CD14-positive monocyte (primary cell): ENCODE measurements at regions of chr1 and their contacts with region 1.

Region 1: DNA sequence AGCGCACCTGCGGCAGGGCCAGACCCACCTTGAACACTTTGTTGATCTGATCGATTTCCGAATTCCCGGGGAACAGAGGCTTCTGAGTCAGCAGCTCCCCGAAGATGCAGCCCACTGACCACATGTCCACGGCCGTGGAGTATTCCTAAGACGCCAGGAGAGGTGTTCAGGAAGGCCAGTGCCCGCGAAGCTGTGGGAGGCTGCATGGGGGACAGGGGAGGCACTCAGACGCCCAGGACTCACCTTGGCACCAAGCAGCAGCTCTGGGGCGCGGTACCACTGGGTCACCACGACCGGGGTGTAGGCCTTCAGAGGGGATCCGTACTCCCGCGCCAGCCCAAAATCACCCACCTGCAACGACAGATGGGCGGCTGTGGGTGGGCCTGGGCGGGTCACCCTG is 11.2 kb upstream of the SLC35E2B start:
- DNase-seq: no peak
- H3K4me3 ChIP-seq: no peak overlapping the region
- H3K4me3 Mint-ChIP-seq: no peak overlapping the region
- H3K27ac ChIP-seq: no peak overlapping the region
- H3K27ac Mint-ChIP-seq: peak overlapping the region in 1 of 7 donors; percentile 43
- H3K4me1 ChIP-seq: no peaks in the 10 kb centered on the region
- H3K4me1 Mint-ChIP-seq: no peaks in the 10 kb centered on the region
- H3K27me3 ChIP-seq: peaks cover 0 to 3% of the 10 kb centered on the region in 2 donors
- H3K27me3 Mint-ChIP-seq: peaks cover 3% of the 10 kb centered on the region in 3 donors
- CTCF ChIP-seq: no peak

Region 2: DNA sequence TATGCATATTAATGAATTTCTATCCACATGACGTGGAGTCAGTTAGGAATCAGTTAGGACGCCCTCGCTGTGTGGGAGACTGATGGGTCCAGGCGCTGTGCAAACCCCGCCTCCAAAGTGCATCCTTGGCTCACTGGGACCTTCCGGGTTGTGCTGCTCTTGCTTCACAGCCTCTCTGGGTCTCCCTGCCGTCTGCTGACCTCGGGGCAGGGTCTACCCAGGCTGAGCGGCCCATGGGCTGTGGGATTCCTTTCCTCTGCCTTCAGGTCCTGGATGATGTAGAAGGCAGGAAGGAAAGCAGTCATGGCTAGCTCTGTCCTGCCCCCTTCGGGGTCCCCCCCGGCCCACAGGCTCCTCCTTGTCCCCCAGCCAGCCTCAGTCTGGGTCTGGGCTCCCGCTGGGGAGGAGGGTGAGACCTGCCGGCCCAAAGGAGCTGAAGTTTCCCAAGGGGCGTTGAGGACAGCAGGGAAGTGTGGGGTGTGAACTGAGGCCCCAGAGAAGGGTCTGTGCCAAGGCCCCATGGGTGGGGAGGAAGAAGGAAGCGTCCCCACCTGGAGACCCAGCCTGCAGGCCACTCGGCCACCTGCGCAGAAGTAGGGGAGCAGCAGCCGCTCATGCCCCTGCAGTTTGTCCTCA is 45.0 kb after region 1 on chr1:
- intact Hi-C with region 1: loop called (anchors 10 kb)
- DNase-seq: no peak
- H3K4me3 ChIP-seq: no peak overlapping the region
- H3K4me3 Mint-ChIP-seq: no peak overlapping the region
- H3K27ac ChIP-seq: no peak overlapping the region
- H3K27ac Mint-ChIP-seq: peak overlapping the region in 1 of 7 donors; percentile 74
- H3K4me1 ChIP-seq: no peaks in the 10 kb centered on the region
- H3K4me1 Mint-ChIP-seq: peaks cover 7% of the 10 kb centered on the region
- H3K27me3 ChIP-seq: no peaks in the 10 kb centered on the region
- H3K27me3 Mint-ChIP-seq: no peaks in the 10 kb centered on the region
- CTCF ChIP-seq: no peak

Region 3: DNA sequence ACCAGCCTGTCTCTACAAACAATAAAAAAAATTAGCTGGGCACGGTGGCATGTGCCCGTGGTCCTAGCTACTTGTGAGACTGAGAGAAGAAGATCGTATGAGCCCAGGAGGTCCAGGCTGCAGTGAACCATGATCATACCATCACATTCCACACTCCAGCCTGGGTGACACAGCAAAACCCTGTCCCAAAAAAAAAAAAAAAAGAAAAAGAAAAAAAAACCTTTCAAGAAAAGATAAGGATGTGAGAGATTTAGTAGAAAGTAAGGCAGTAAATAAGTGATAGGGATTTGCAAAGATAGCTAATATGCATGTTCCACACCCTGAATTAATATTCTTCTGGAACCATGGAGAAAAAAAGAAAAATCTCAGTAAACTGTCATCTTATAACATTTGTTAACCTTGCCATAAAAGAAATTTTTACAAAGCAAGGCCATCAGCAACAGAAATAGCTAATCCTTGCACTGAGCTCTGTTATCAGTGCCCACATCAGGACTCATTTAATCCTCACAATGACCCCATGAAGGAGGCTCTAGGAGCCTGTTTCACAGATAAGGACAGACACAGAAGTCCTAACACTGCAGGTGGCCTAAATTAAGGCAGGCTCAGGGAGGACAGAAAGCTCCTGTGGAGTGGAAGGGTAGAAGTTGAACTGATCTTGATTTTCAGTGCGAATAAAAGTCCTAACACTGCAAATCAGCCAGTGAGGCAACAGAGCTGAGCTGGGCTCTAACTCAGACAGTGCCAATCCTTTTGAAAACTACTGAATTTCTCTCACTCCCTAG is 179.5 kb after region 1 on chr1:
- intact Hi-C with region 1: no loop called
- DNase-seq: no peak
- H3K4me3 ChIP-seq: no peak overlapping the region
- H3K4me3 Mint-ChIP-seq: no peak overlapping the region
- H3K27ac ChIP-seq: peak overlapping the region in 1 of 2 donors; percentile 66
- H3K27ac Mint-ChIP-seq: peak overlapping the region in 5 of 7 donors; percentile 55 to 79 (median 69)
- H3K4me1 ChIP-seq: peaks cover 14 to 30% of the 10 kb centered on the region in 2 donors
- H3K4me1 Mint-ChIP-seq: peaks cover 72% of the 10 kb centered on the region
- H3K27me3 ChIP-seq: no peaks in the 10 kb centered on the region
- H3K27me3 Mint-ChIP-seq: peaks cover 0 to 2% (median 0%) of the 10 kb centered on the region in 3 donors
- CTCF ChIP-seq: no peak